GM12878 (cell line): ENCODE measurements at regions of chr3 and their contacts with region 1.

Region 1: DNA sequence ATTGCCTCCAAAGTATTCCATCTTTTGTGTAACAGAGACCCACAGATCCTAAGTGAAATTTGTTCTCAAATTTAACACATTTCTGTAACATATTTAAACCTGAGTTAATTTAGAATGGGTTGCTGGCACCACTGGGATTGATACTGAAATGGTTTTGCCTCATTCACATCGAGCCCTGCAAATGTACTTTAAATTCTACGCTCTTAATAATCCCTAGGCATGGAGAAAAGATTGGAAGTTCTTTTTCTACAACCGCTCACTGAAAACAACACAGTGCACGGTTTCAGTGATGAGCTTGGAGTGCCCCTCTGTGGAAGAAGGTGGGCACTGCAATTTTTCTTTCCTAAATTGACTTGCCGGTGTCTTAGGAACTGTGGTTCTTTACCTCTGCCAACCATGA is 109.9 kb upstream of the ATP11B start:
- DNase-seq: peak; percentile 36
- ATAC-seq: peak; percentile 72
- H3K4me3 ChIP-seq: no peak overlapping the region
- H3K27ac ChIP-seq: no peak overlapping the region
- H3K4me1 ChIP-seq: peaks cover 7% of the 10 kb centered on the region; the same call in 1 of the 2 replicates
- H3K27me3 ChIP-seq: no peaks in the 10 kb centered on the region
- CTCF ChIP-seq: peak; percentile 89 to 98 (median 93); a peak in 5 of 6 replicates
- EP300 ChIP-seq: no peak
- POLR2A ChIP-seq: no peak
- RAD21 ChIP-seq: peak; percentile 96

Region 2: DNA sequence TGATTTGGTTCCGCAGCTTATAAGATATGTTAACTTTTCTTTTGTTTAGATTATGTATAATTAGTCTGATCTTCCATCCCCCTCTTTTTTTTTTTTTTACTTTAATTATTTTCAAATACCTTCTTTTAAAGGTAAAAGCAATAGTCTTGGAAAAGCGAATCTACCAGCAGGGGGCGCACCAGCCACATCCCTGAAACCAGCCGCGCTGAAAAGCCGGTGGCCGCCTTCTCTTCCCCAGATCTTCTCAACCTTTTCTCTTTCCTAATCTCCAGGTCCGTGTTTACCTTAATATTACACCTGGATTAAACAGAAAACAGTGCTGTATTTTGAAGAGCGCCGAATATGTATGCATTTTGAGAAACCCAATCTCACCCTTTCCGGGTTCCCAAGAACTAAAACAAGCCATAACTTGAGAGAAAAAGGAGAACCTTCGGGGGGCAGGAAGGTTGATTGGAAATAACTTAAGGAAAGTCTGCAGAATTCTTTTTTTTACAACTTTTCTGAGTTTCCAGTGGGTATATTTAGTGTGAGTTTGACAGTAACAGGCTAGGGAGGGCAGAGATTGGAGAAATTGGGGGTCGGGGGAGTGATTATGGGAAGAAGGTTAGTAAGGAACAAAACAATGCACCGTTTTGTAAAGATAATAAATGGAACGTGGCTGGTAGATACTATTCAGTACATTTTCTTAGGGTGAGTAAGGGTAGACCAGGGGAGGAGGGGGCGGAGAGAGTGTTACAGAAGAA is 973.7 kb before region 1 on chr3:
- CTCF ChIA-PET with region 1: interaction called, 36 read pairs
- POLR2A ChIA-PET with region 1: no interaction called
- RAD21 ChIA-PET with region 1: interaction called, 6 read pairs
- SMC1A ChIA-PET with region 1: interaction called, 4 read pairs
- in situ Hi-C with region 1: loop called (anchors 5 kb)
- intact Hi-C with region 1: loop called (anchors 1 kb)
- DNase-seq: no peak
- ATAC-seq: peak; percentile 81
- H3K4me3 ChIP-seq: no peak overlapping the region
- H3K27ac ChIP-seq: no peak overlapping the region
- H3K4me1 ChIP-seq: no peaks in the 10 kb centered on the region
- H3K27me3 ChIP-seq: peaks cover 3 to 20% of the 10 kb centered on the region in 2 experiments
- CTCF ChIP-seq: peak; percentile 50 to 78 (median 63)
- EP300 ChIP-seq: no peak
- POLR2A ChIP-seq: no peak
- RAD21 ChIP-seq: peak; percentile 85

Region 3: DNA sequence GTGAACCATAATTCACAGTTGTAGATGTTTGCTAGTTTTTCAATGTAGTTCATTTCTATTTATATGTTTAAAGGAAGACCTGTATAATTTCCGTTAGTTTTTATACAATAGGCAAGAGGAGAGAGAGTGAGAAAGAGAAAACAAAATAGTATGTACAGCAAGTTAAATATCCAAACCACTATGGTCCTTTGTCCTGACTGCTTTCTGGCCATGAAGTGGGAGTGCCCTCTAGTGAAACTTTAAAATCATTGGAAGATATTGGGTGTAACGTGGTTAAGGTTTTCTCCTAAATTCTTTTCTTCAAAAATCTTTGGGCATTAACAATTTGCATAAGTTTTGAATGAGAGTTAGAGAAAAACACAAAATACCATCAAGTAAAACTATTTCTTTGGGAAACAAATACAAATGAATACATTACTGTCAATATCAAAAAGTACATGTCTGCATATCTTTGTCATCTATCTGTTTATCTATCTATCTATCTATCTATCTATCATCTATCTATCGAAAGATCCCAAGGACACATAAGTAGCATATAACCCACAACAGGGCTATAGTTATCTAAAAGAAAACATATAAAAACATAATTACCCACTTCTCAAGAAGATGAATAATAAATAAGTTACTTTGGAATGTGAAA is 424.8 kb before region 1 on chr3:
- CTCF ChIA-PET with region 1: no interaction called
- POLR2A ChIA-PET with region 1: no interaction called
- RAD21 ChIA-PET with region 1: no interaction called
- SMC1A ChIA-PET with region 1: no interaction called
- in situ Hi-C with region 1: no loop called
- intact Hi-C with region 1: loop called (anchors 5 kb)
- DNase-seq: no peak
- ATAC-seq: peak; percentile 55; the same call in 2 of the 3 replicates
- H3K4me3 ChIP-seq: no peak overlapping the region
- H3K27ac ChIP-seq: no peak overlapping the region
- H3K4me1 ChIP-seq: no peaks in the 10 kb centered on the region
- H3K27me3 ChIP-seq: no peaks in the 10 kb centered on the region; a peak in 1 of 4 replicates
- CTCF ChIP-seq: peak; percentile 36 to 57 (median 38); a peak in 4 of 6 replicates
- EP300 ChIP-seq: no peak
- POLR2A ChIP-seq: no peak
- RAD21 ChIP-seq: peak; percentile 96

Region 4: DNA sequence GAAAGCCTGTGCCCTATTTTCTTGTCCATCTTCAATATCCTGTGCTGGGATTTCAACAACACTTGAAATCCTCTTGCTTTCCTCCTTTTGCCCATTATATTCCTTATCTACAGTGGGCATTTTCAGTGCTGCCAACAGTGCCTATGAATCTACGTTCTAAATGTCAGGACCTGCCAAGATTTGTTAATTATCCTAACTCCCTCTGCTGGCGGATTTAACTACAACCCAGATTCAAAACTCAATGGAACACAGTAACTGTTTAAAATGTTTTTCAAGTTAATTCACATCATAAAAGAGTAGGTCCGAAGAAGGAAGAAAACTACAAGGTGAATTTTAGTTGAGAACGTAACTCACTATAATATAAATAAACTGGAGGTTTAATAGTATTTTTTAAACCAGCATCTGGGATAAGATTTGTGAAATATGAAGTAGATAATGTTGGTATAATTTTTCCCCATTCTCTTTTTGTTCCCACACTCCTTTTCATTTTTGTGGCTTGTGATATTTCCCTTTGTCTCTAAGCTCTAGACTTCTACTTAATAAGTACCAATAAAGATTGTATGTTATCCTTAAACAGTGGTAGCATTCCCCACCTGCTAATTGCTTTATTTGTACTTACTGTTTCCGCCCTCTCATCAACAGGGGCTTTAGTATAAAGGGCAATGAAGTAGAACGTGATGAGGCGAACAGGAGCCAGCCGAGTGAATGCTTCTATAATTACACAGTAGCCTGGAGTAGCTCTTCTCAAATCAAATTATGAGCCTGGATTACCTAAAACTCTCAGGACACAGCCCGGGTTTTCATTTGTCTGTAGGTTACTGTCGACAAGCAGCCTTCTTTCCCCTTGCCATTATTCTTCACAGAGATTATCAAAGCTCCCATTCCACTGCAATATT is 192.6 kb before region 1 on chr3:
- CTCF ChIA-PET with region 1: interaction called, 4 read pairs
- POLR2A ChIA-PET with region 1: interaction called, 9 read pairs
- RAD21 ChIA-PET with region 1: interaction called, 3 read pairs
- SMC1A ChIA-PET with region 1: interaction called, 4 read pairs
- in situ Hi-C with region 1: no loop called
- intact Hi-C with region 1: loop called (anchors 5 kb)
- DNase-seq: no peak
- ATAC-seq: peak; percentile 65
- H3K4me3 ChIP-seq: no peak overlapping the region
- H3K27ac ChIP-seq: no peak overlapping the region
- H3K4me1 ChIP-seq: no peaks in the 10 kb centered on the region
- H3K27me3 ChIP-seq: no peaks in the 10 kb centered on the region; a peak in 1 of 4 replicates
- CTCF ChIP-seq: peak; percentile 30 to 51 (median 33); a peak in 4 of 6 replicates
- EP300 ChIP-seq: no peak
- POLR2A ChIP-seq: no peak
- RAD21 ChIP-seq: peak; percentile 30

Region 5: GRCh38 chr3:182626484-182627467 is 56.7 kb before region 1 on chr3:
- CTCF ChIA-PET with region 1: interaction called, 17 read pairs
- POLR2A ChIA-PET with region 1: no interaction called
- RAD21 ChIA-PET with region 1: interaction called, 5 read pairs
- SMC1A ChIA-PET with region 1: interaction called, 7 read pairs
- in situ Hi-C with region 1: no loop called
- intact Hi-C with region 1: no loop called
- DNase-seq: no peak
- ATAC-seq: no peak
- H3K4me3 ChIP-seq: no peak overlapping the region
- H3K27ac ChIP-seq: no peak overlapping the region
- H3K4me1 ChIP-seq: no peaks in the 10 kb centered on the region
- H3K27me3 ChIP-seq: no peaks in the 10 kb centered on the region
- CTCF ChIP-seq: no peak
- EP300 ChIP-seq: no peak
- POLR2A ChIP-seq: no peak
- RAD21 ChIP-seq: no peak